Common myeloid progenitor, CD34-positive (primary cell): ENCODE measurements at regions of chr5 and their contacts with region 1.

Region 1: DNA sequence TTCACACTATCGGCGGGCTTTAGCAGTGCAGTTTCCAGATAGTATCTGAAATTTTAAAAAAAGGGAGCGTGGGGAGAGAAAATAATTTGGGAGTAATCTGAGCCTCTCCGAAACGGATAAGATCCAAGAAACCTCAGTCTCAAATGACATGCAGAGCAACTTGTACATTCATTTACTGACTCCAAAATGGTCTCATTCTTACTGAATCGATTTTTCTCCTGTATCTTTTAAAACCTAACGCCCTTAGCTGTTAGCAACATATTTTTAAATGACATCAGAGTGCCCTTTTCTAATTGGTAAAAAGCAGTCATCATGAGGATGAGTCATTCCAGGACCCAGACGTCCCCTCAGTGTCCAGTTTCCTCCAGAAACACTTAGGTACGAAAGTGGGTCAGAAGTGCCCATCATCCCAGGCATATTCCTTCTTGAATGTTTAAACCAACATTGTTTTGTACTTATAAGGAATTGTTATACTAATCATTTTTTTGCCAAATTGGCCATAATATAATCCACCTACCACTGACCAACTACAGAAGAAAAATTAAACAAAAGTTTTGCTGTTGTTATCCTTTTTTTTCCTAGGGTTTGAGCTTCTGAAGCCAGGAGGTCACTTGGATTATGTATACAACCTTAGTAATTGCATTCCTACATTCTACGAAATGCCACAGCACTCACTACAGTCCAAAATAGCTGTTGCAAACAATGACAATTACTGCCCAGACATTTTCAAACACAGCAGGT is 354.4 kb downstream of the ADAMTS6 start:
- DNase-seq: no peak
- H3K4me3 ChIP-seq: no peak overlapping the region
- H3K27ac ChIP-seq: no peak overlapping the region
- H3K4me1 ChIP-seq: no peaks in the 10 kb centered on the region
- H3K27me3 ChIP-seq: no peaks in the 10 kb centered on the region

Region 2: GRCh38 chr5:65142511-65143011 is 15.2 kb after region 1 on chr5:
- CTCF ChIA-PET with region 1: interaction called, 4 read pairs
- POLR2A ChIA-PET with region 1: interaction called, 11 read pairs
- DNase-seq: no peak
- H3K4me3 ChIP-seq: no peak overlapping the region
- H3K27ac ChIP-seq: no peak overlapping the region
- H3K4me1 ChIP-seq: no peaks in the 10 kb centered on the region
- H3K27me3 ChIP-seq: no peaks in the 10 kb centered on the region